Naive thymus-derived CD4-positive, alpha-beta T cell (primary cell): ENCODE measurements at regions of chr1 and their contacts with region 1.

Region 1: GRCh38 chr1:241677201-241677600 is 25.1 kb downstream of the WDR64 start:
- DNase-seq: peak in 8 of 9 donors; percentile 23 to 83 (median 75)
- ATAC-seq: peak; percentile 97
- H3K4me3 ChIP-seq: peak overlapping the region; percentile 28
- H3K4me3 Mint-ChIP-seq: peak overlapping the region; percentile 53 to 88 (median 76)
- H3K27ac ChIP-seq: peak overlapping the region; percentile 55
- H3K27ac Mint-ChIP-seq: peak overlapping the region; percentile 85 to 97 (median 90)
- H3K4me1 ChIP-seq: peaks cover 8 to 21% of the 10 kb centered on the region in 2 donors
- H3K4me1 Mint-ChIP-seq: peaks cover 4 to 30% (median 20%) of the 10 kb centered on the region in 7 donors
- H3K27me3 ChIP-seq: no peaks in the 10 kb centered on the region
- H3K27me3 Mint-ChIP-seq: peaks cover 0 to 6% (median 0%) of the 10 kb centered on the region in 5 donors

Region 2: GRCh38 chr1:241519308-241520079 is 157.7 kb before region 1 on chr1 and contains the start of gene FH:
- CTCF ChIA-PET with region 1: no interaction called
- POLR2A ChIA-PET with region 1: interaction called, 4 read pairs
- intact Hi-C with region 1: loop called in 1 of 2 experiments (anchors 1 kb)
- DNase-seq: peak; percentile 83 to 96 (median 94)
- ATAC-seq: peak; percentile 99
- H3K4me3 ChIP-seq: peak within 1 kb of the TSS; percentile 66
- H3K4me3 Mint-ChIP-seq: peak within 1 kb of the TSS in 8 of 10 donors; percentile 85 to 96 (median 92)
- H3K27ac ChIP-seq: peak within 1 kb of the TSS; percentile 82
- H3K27ac Mint-ChIP-seq: peak within 1 kb of the TSS; percentile 56 to 92 (median 82)
- H3K4me1 ChIP-seq: peaks cover 5 to 6% of the 10 kb centered on the region in 2 donors
- H3K4me1 Mint-ChIP-seq: peaks cover 2 to 46% (median 38%) of the 10 kb centered on the region in 7 donors
- H3K27me3 ChIP-seq: no peaks in the 10 kb centered on the region
- H3K27me3 Mint-ChIP-seq: peaks cover 15 to 28% (median 26%) of the 10 kb centered on the region in 5 donors
- total RNA-seq, gene FH: 17.3 to 57.9 (median 21.8) TPM

Region 3: GRCh38 chr1:241627453-241628259 is 49.5 kb before region 1 on chr1:
- CTCF ChIA-PET with region 1: interaction called, 3 read pairs
- POLR2A ChIA-PET with region 1: interaction called, 3 read pairs
- intact Hi-C with region 1: loop called in 1 of 2 experiments (anchors 1 kb)
- DNase-seq: peak in 7 of 9 donors; percentile 59 to 81 (median 72)
- ATAC-seq: peak; percentile 90
- H3K4me3 ChIP-seq: peak overlapping the region; percentile 37
- H3K4me3 Mint-ChIP-seq: peak overlapping the region; percentile 55 to 87 (median 84)
- H3K27ac ChIP-seq: peak overlapping the region; percentile 70
- H3K27ac Mint-ChIP-seq: peak overlapping the region; percentile 87 to 96 (median 92)
- H3K4me1 ChIP-seq: peaks cover 0 to 9% of the 10 kb centered on the region in 2 donors
- H3K4me1 Mint-ChIP-seq: peaks cover 6 to 33% (median 25%) of the 10 kb centered on the region in 7 donors
- H3K27me3 ChIP-seq: no peaks in the 10 kb centered on the region
- H3K27me3 Mint-ChIP-seq: no peaks in the 10 kb centered on the region

Region 4: GRCh38 chr1:241706954-241707365 is 29.8 kb after region 1 on chr1:
- CTCF ChIA-PET with region 1: no interaction called
- POLR2A ChIA-PET with region 1: no interaction called
- intact Hi-C with region 1: loop called in 1 of 2 experiments (anchors 1 kb)
- DNase-seq: peak in 7 of 9 donors; percentile 25 to 59 (median 43)
- ATAC-seq: peak; percentile 66
- H3K4me3 ChIP-seq: no peak overlapping the region
- H3K4me3 Mint-ChIP-seq: peak overlapping the region; percentile 15 to 78 (median 46)
- H3K27ac ChIP-seq: no peak overlapping the region
- H3K27ac Mint-ChIP-seq: peak overlapping the region in 6 of 9 donors; percentile 8 to 87 (median 61)
- H3K4me1 ChIP-seq: peaks cover 8 to 18% of the 10 kb centered on the region in 2 donors
- H3K4me1 Mint-ChIP-seq: peaks cover 5 to 20% (median 17%) of the 10 kb centered on the region in 7 donors
- H3K27me3 ChIP-seq: no peaks in the 10 kb centered on the region
- H3K27me3 Mint-ChIP-seq: peaks cover 0 to 9% (median 0%) of the 10 kb centered on the region in 5 donors

Region 5: GRCh38 chr1:241756582-241756981 is 79.4 kb after region 1 on chr1:
- CTCF ChIA-PET with region 1: no interaction called
- POLR2A ChIA-PET with region 1: no interaction called
- intact Hi-C with region 1: loop called in 1 of 2 experiments (anchors 5 kb)
- DNase-seq: peak in 1 of 9 donors; percentile 5
- ATAC-seq: no peak
- H3K4me3 ChIP-seq: no peak overlapping the region
- H3K4me3 Mint-ChIP-seq: no peak overlapping the region
- H3K27ac ChIP-seq: no peak overlapping the region
- H3K27ac Mint-ChIP-seq: no peak overlapping the region
- H3K4me1 ChIP-seq: no peaks in the 10 kb centered on the region
- H3K4me1 Mint-ChIP-seq: no peaks in the 10 kb centered on the region
- H3K27me3 ChIP-seq: no peaks in the 10 kb centered on the region
- H3K27me3 Mint-ChIP-seq: peaks cover 0 to 2% (median under 1%) of the 10 kb centered on the region in 5 donors